Endothelial cell of umbilical vein (primary cell): ENCODE measurements at regions of chr3 and their contacts with region 1.

Region 1: GRCh38 chr3:115147329-115148141 is 447 bp upstream of the ZBTB20 start:
- DNase-seq: peak; percentile 100
- H3K4me3 ChIP-seq: peak overlapping the region; percentile 81 to 96 (median 93)
- H3K27ac ChIP-seq: peak overlapping the region; percentile 97
- H3K4me1 ChIP-seq: peaks cover 6% of the 10 kb centered on the region
- H3K27me3 ChIP-seq: no peaks in the 10 kb centered on the region
- CTCF ChIP-seq: no peak
- POLR2A ChIP-seq: peak; percentile 60

Region 2: GRCh38 chr3:114383875-114384557 is 763.5 kb before region 1 on chr3:
- CTCF ChIA-PET with region 1: no interaction called
- POLR2A ChIA-PET with region 1: interaction called, 4 read pairs
- dilution Hi-C with region 1: no loop called
- intact Hi-C with region 1: loop called (anchors 1 kb)
- DNase-seq: peak; percentile 81
- H3K4me3 ChIP-seq: peak overlapping the region; percentile 35 to 61 (median 42)
- H3K27ac ChIP-seq: peak overlapping the region; percentile 55
- H3K4me1 ChIP-seq: peaks cover 9% of the 10 kb centered on the region
- H3K27me3 ChIP-seq: no peaks in the 10 kb centered on the region
- CTCF ChIP-seq: peak; percentile 89 to 92
- POLR2A ChIP-seq: no peak

Region 3: DNA sequence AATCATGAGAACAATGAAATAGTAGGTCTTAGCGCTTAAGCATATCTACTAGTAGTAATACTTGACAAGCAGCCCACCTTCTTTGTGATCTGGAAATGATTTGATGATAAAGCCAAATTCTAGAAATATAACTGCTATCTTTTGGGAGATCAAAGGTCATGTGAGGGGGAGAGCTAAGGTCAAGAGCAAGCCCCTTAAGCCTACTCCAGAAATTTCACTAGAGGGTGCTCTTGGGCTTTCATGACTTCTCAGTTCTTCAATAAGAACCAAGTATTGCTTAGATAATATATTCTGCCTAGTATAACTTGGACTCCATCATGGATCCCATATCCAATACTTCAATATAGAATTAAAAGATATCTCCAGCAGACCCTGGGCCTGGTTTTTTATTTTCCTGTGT is 320.0 kb before region 1 on chr3:
- CTCF ChIA-PET with region 1: no interaction called
- POLR2A ChIA-PET with region 1: no interaction called
- dilution Hi-C with region 1: no loop called
- intact Hi-C with region 1: no loop called
- DNase-seq: peak; percentile 47
- H3K4me3 ChIP-seq: no peak overlapping the region
- H3K27ac ChIP-seq: no peak overlapping the region
- H3K4me1 ChIP-seq: no peaks in the 10 kb centered on the region
- H3K27me3 ChIP-seq: no peaks in the 10 kb centered on the region
- CTCF ChIP-seq: peak; percentile 18 to 45
- POLR2A ChIP-seq: no peak

Region 4: DNA sequence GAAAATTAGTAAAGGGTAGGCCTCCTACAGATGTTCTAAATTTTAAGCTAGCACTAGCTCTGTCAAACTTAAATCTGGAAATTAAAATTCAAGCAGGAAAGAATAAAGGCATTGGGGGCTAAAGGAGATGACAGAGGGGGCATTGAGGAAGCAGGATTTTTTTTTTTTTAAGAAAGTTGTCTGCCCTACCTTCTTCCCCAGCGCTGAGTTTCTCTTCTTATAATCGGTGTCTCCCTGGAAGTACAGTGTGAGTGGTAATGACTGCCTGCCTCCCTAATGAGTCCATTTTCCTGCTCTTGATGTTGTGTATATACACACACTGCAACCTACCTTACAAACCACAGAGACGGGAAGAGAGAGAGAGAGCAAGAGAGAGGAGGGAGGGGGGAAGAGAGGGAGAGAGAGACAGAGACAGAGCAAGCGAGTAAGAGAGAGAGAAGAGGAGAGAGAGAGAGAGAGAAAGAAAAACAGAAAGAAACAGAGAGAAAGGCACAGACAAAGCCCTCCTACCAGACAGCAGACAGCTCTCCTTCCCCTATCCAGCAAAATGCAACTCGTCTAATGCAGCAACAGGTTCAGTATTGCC is 47.5 kb before region 1 on chr3:
- CTCF ChIA-PET with region 1: no interaction called
- POLR2A ChIA-PET with region 1: no interaction called
- dilution Hi-C with region 1: no loop called
- intact Hi-C with region 1: loop called (anchors 2 kb)
- DNase-seq: peak; percentile 74
- H3K4me3 ChIP-seq: peak overlapping the region; percentile 25 to 48 (median 25)
- H3K27ac ChIP-seq: no peak overlapping the region
- H3K4me1 ChIP-seq: peaks cover 3% of the 10 kb centered on the region
- H3K27me3 ChIP-seq: no peaks in the 10 kb centered on the region
- CTCF ChIP-seq: no peak
- POLR2A ChIP-seq: no peak

Region 5: GRCh38 chr3:115211810-115212492 is 64.4 kb after region 1 on chr3:
- CTCF ChIA-PET with region 1: no interaction called
- POLR2A ChIA-PET with region 1: no interaction called
- dilution Hi-C with region 1: no loop called
- intact Hi-C with region 1: loop called (anchors 1 kb)
- DNase-seq: peak; percentile 44
- H3K4me3 ChIP-seq: no peak overlapping the region
- H3K27ac ChIP-seq: no peak overlapping the region
- H3K4me1 ChIP-seq: peaks cover 14% of the 10 kb centered on the region
- H3K27me3 ChIP-seq: no peaks in the 10 kb centered on the region
- CTCF ChIP-seq: no peak
- POLR2A ChIP-seq: no peak

Region 6: GRCh38 chr3:115518100-115518852 is 370.7 kb after region 1 on chr3:
- CTCF ChIA-PET with region 1: no interaction called
- POLR2A ChIA-PET with region 1: no interaction called
- dilution Hi-C with region 1: no loop called
- intact Hi-C with region 1: loop called (anchors 2 kb)
- DNase-seq: peak; percentile 92
- H3K4me3 ChIP-seq: no peak overlapping the region
- H3K27ac ChIP-seq: peak overlapping the region; percentile 2
- H3K4me1 ChIP-seq: peaks cover 8% of the 10 kb centered on the region
- H3K27me3 ChIP-seq: peaks cover 0 to 1% of the 10 kb centered on the region in 2 experiments
- CTCF ChIP-seq: no peak
- POLR2A ChIP-seq: no peak

Region 7: GRCh38 chr3:115783938-115784738 is 636.6 kb after region 1 on chr3:
- CTCF ChIA-PET with region 1: interaction called, 9 read pairs
- POLR2A ChIA-PET with region 1: no interaction called
- dilution Hi-C with region 1: no loop called
- intact Hi-C with region 1: loop called (anchors 1 kb)
- DNase-seq: peak; percentile 89
- H3K4me3 ChIP-seq: peak overlapping the region; percentile 44 to 67 (median 56)
- H3K27ac ChIP-seq: peak overlapping the region; percentile 85
- H3K4me1 ChIP-seq: peaks cover 5% of the 10 kb centered on the region
- H3K27me3 ChIP-seq: peaks cover 4 to 6% of the 10 kb centered on the region in 2 experiments
- CTCF ChIP-seq: peak; percentile 98 to 99
- POLR2A ChIP-seq: no peak